Ascending aorta (tissue), 2 donors: ENCODE measurements at regions of chr18 and their contacts with region 1.

Region 1: GRCh38 chr18:62881509-62882016 is 166.2 kb downstream of the PHLPP1 start:
- DNase-seq: peak in 1 of 2 donors; percentile 73
- H3K4me3 ChIP-seq: no peak overlapping the region
- H3K27ac ChIP-seq: no peak overlapping the region
- H3K4me1 ChIP-seq: peaks cover 0 to 2% of the 10 kb centered on the region in 2 donors
- H3K27me3 ChIP-seq: no peaks in the 10 kb centered on the region
- CTCF ChIP-seq: no peak

Region 2: GRCh38 chr18:61400716-61401115 is 1480.8 kb before region 1 on chr18:
- intact Hi-C with region 1: no loop called
- DNase-seq: no peak
- H3K4me3 ChIP-seq: no peak overlapping the region
- H3K27ac ChIP-seq: no peak overlapping the region
- H3K4me1 ChIP-seq: no peaks in the 10 kb centered on the region
- H3K27me3 ChIP-seq: no peaks in the 10 kb centered on the region
- CTCF ChIP-seq: no peak

Region 3: GRCh38 chr18:62925031-62925688 is 43.6 kb after region 1 on chr18:
- intact Hi-C with region 1: no loop called
- DNase-seq: no peak
- H3K4me3 ChIP-seq: no peak overlapping the region
- H3K27ac ChIP-seq: no peak overlapping the region
- H3K4me1 ChIP-seq: no peaks in the 10 kb centered on the region
- H3K27me3 ChIP-seq: no peaks in the 10 kb centered on the region
- CTCF ChIP-seq: no peak

Region 4: DNA sequence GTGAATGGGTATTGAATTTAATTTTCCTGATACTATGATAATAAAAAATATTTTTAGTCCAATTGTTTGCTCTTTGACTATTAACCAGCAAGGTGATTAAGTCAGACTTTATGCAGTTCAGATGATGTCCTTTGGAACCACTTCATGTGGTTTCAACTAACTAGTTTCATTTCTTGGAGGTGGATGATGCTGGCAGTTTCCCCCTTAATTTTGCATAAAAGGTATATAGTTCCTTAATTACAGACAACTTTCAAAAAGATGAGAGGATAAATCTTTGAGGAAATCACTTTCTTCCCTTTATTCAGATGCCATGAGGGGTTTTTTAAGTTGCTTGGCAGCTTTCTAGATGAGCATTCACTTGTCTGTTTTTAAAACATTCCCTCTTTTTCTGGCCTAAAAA is 56.9 kb after region 1 on chr18:
- intact Hi-C with region 1: loop called (anchors 5 kb)
- DNase-seq: no peak
- H3K4me3 ChIP-seq: no peak overlapping the region
- H3K27ac ChIP-seq: peak overlapping the region; percentile 58 to 82
- H3K4me1 ChIP-seq: peaks cover 6 to 30% of the 10 kb centered on the region in 2 donors
- H3K27me3 ChIP-seq: no peaks in the 10 kb centered on the region
- CTCF ChIP-seq: no peak

Region 5: GRCh38 chr18:63043516-63043915 is 162.0 kb after region 1 on chr18:
- intact Hi-C with region 1: no loop called
- DNase-seq: no peak
- H3K4me3 ChIP-seq: no peak overlapping the region
- H3K27ac ChIP-seq: no peak overlapping the region
- H3K4me1 ChIP-seq: no peaks in the 10 kb centered on the region
- H3K27me3 ChIP-seq: no peaks in the 10 kb centered on the region
- CTCF ChIP-seq: no peak